CD4-positive, alpha-beta memory T cell (primary cell): ENCODE measurements at regions of chr3 and their contacts with region 1.

Region 1: DNA sequence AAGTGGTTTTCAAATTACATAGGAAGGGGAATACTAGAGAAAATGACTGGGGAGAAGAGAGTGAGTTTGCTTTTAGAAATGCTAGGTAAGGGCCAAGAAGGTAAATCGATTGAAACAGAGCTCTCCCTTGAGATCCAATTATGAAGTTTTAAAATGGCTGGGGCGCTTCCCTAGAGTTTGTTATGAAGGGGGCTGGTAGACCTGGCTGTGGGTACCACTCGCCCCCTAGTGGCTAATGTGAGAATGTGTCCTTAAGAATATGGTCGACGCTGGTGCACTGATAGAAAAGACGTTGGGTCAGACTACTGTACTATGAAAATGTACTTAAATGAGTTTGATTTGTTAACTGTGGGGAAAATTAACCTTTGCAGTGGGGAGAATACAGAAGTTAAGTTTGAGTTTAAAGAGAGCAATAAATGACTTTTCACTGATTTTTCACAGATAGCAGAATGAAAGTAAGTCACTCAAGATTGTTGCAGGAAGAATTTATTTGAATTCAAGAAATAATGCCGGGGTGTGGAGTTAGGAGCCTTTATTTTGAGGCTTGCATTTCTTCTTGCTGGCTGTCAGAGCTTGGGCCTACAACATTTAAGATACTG is 9.2 kb downstream of the TMPRSS7 start:
- DNase-seq: peak; percentile 53 to 64 (median 56)
- H3K4me3 ChIP-seq: no peak overlapping the region
- H3K4me3 Mint-ChIP-seq: no peak overlapping the region
- H3K27ac ChIP-seq: no peak overlapping the region
- H3K27ac Mint-ChIP-seq: no peak overlapping the region
- H3K4me1 ChIP-seq: no peaks in the 10 kb centered on the region
- H3K4me1 Mint-ChIP-seq: no peaks in the 10 kb centered on the region
- H3K27me3 ChIP-seq: no peaks in the 10 kb centered on the region
- H3K27me3 Mint-ChIP-seq: peaks cover 1 to 2% of the 10 kb centered on the region in 2 donors

Region 2: GRCh38 chr3:112013058-112013783 is 30.5 kb before region 1 on chr3:
- CTCF ChIA-PET with region 1: interaction called, 12 read pairs
- POLR2A ChIA-PET with region 1: no interaction called
- intact Hi-C with region 1: no loop called
- DNase-seq: peak; percentile 46 to 54 (median 51)
- H3K4me3 ChIP-seq: peak overlapping the region in 1 of 2 donors; percentile 19
- H3K4me3 Mint-ChIP-seq: peak overlapping the region in 5 of 8 donors; percentile 3 to 51 (median 33)
- H3K27ac ChIP-seq: no peak overlapping the region
- H3K27ac Mint-ChIP-seq: peak overlapping the region in 3 of 7 donors; percentile 4 to 57 (median 56)
- H3K4me1 ChIP-seq: peaks cover 4% of the 10 kb centered on the region
- H3K4me1 Mint-ChIP-seq: peaks cover 5 to 12% (median 8%) of the 10 kb centered on the region in 4 donors
- H3K27me3 ChIP-seq: no peaks in the 10 kb centered on the region
- H3K27me3 Mint-ChIP-seq: no peaks in the 10 kb centered on the region

Region 3: DNA sequence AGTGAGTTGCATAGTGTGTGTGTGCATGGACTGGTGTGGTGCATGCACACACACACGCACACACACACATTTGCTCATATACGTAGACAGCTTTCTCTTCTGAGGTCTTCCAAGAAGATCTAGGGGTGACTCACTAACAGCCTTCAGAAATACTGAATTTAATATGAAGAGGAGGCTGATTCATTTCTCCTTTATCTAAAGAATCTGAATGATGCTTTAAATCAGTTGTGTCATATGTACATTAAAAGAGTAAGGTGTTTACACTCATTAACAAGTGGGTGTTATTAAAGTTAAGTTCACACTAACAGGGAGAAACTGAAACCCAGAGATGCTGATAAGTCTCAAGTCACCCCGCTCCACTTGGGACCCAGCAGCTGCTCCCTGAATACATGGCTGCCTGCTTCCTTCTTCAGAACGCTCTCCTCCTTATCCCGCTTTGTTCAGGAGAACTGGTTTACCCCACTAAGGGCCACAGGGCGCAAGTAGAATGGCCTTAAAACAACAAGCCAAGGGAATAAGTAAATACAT is 12.8 kb after region 1 on chr3:
- CTCF ChIA-PET with region 1: interaction called, 43 read pairs
- POLR2A ChIA-PET with region 1: interaction called, 3 read pairs
- intact Hi-C with region 1: no loop called
- DNase-seq: no peak
- H3K4me3 ChIP-seq: no peak overlapping the region
- H3K4me3 Mint-ChIP-seq: peak overlapping the region in 3 of 8 donors; percentile 3 to 53 (median 34)
- H3K27ac ChIP-seq: no peak overlapping the region
- H3K27ac Mint-ChIP-seq: no peak overlapping the region
- H3K4me1 ChIP-seq: no peaks in the 10 kb centered on the region
- H3K4me1 Mint-ChIP-seq: peaks cover 4 to 12% (median 5%) of the 10 kb centered on the region in 4 donors
- H3K27me3 ChIP-seq: no peaks in the 10 kb centered on the region
- H3K27me3 Mint-ChIP-seq: peaks cover 2 to 21% of the 10 kb centered on the region in 2 donors

Region 4: DNA sequence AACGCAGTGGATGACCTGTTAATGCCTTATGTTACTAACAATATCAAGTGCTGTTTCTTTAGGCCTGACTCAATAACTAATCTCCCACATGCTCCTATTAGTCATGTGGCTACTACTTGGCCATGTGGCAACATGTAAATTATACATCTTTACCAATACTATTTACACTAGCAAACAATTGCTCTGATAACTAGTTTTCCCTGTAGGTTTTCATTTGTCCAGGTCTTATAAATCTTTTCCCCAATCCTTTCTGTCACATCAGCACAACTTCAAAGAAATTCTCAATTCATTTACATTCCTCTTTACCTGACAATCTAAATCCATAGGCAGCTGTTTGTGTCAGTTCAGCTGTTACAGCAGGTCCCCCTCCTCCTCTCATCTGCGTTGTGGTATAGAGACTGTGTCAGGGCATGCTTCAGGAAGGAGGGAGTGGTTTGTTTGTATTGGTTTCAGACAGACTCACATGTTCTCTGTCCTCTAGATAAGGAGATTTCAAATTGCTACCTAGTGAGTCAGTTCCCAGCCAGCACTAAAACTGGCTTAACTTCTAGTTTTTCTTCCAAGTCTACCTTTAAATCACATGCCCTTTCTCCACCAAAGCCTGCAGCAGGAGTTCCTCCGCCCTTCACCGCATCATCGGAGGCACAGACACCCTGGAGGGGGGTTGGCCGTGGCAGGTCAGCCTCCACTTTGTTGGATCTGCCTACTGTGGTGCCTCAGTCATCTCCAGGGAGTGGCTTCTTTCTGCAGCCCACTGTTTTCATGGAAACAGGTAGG is 31.2 kb after region 1 on chr3:
- CTCF ChIA-PET with region 1: interaction called, 12 read pairs
- POLR2A ChIA-PET with region 1: interaction called, 4 read pairs
- intact Hi-C with region 1: loop called (anchors 1 kb)
- DNase-seq: peak; percentile 38 to 68 (median 61)
- H3K4me3 ChIP-seq: no peak overlapping the region
- H3K4me3 Mint-ChIP-seq: peak overlapping the region; percentile 37 to 82 (median 72)
- H3K27ac ChIP-seq: peak overlapping the region; percentile 21
- H3K27ac Mint-ChIP-seq: peak overlapping the region; percentile 65 to 93 (median 83)
- H3K4me1 ChIP-seq: peaks cover 35% of the 10 kb centered on the region
- H3K4me1 Mint-ChIP-seq: peaks cover 28 to 60% (median 40%) of the 10 kb centered on the region in 4 donors
- H3K27me3 ChIP-seq: no peaks in the 10 kb centered on the region
- H3K27me3 Mint-ChIP-seq: no peaks in the 10 kb centered on the region

Region 5: GRCh38 chr3:112086076-112086854 is 42.6 kb after region 1 on chr3 and contains the start of gene C3orf52:
- CTCF ChIA-PET with region 1: interaction called, 3 read pairs
- POLR2A ChIA-PET with region 1: no interaction called
- intact Hi-C with region 1: loop called (anchors 1 kb)
- DNase-seq: peak; percentile 45 to 57 (median 55)
- H3K4me3 ChIP-seq: peak within 1 kb of the TSS; percentile 17 to 55
- H3K4me3 Mint-ChIP-seq: peak within 1 kb of the TSS; percentile 83 to 87 (median 86)
- H3K27ac ChIP-seq: no peak within 1 kb of the TSS
- H3K27ac Mint-ChIP-seq: peak within 1 kb of the TSS; percentile 16 to 84 (median 73)
- H3K4me1 ChIP-seq: peaks cover 24% of the 10 kb centered on the region
- H3K4me1 Mint-ChIP-seq: peaks cover 16 to 41% (median 25%) of the 10 kb centered on the region in 4 donors
- H3K27me3 ChIP-seq: no peaks in the 10 kb centered on the region
- H3K27me3 Mint-ChIP-seq: peaks cover 0 to 5% of the 10 kb centered on the region in 2 donors
- total RNA-seq, gene C3orf52: 2.0 to 2.3 TPM

Region 6: DNA sequence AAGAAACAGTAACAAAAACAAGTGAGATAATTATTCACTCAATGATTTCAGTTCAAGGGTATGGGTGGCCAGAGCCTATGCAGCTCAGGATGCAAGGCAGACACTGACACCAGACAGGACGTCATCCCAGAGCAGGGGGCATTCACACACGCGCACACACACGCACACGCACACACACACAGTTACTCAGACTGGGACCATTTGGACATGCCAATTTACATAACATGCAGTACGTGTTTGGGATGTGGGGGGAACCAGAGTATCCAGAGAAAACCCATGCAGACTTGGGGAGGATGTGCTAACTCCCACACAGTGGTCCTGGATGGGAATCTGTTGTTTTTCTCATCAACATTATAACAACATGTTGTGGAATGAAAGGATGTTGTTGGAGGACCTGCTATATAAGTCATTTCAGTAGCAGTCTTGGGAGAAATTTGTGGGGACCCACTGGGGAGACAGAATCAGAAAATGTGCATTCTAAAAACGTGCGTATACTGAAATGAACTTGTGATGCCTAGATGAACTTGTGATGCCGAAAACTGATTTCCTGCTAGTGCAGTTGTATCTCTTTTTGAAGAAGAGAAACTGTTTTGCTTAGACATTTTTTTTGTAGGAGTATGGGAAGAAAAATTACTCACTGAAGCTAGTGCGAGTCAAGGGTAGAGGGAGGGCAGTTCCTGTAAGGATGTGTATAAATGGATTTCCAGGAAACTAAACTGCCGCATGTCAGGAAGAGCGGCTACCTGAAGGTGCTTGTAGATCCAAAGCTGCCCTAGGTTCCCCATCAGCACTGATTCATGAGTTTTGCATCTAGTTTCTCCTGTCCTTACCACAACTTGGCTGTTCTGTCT is 314.5 kb after region 1 on chr3:
- CTCF ChIA-PET with region 1: no interaction called
- POLR2A ChIA-PET with region 1: no interaction called
- intact Hi-C with region 1: no loop called
- DNase-seq: peak; percentile 15 to 76 (median 36)
- H3K4me3 ChIP-seq: peak overlapping the region in 1 of 2 donors; percentile 48
- H3K4me3 Mint-ChIP-seq: peak overlapping the region; percentile 49 to 84 (median 80)
- H3K27ac ChIP-seq: peak overlapping the region; percentile 19
- H3K27ac Mint-ChIP-seq: peak overlapping the region; percentile 38 to 84 (median 68)
- H3K4me1 ChIP-seq: peaks cover 12% of the 10 kb centered on the region
- H3K4me1 Mint-ChIP-seq: peaks cover 10 to 21% (median 14%) of the 10 kb centered on the region in 4 donors
- H3K27me3 ChIP-seq: no peaks in the 10 kb centered on the region
- H3K27me3 Mint-ChIP-seq: no peaks in the 10 kb centered on the region